ENCODE measurements at regions of chr2 and their contacts with region 1.

Region 1: GRCh38 chr2:241637000-241637791 is at the starts of genes ATG4B and THAP4:
- DNase-seq: peak; percentile 84
- H3K4me3 Mint-ChIP-seq: peak within 1 kb of the TSS; percentile 91
- H3K27ac Mint-ChIP-seq: peak within 1 kb of the TSS; percentile 84
- H3K4me1 Mint-ChIP-seq: peaks cover 54% of the 10 kb centered on the region
- H3K27me3 Mint-ChIP-seq: no peaks in the 10 kb centered on the region
- total RNA-seq, gene ATG4B: 85.0 to 85.9 TPM
- total RNA-seq, gene THAP4: 43.7 to 44.5 TPM

Region 2: GRCh38 chr2:241508240-241509154 is 128.7 kb before region 1 on chr2 and contains the start of gene STK25:
- CTCF ChIA-PET with region 1: no interaction called
- POLR2A ChIA-PET with region 1: no interaction called
- intact Hi-C with region 1: loop called (anchors 1 kb)
- DNase-seq: peak; percentile 98
- H3K4me3 Mint-ChIP-seq: peak within 1 kb of the TSS; percentile 79
- H3K27ac Mint-ChIP-seq: peak within 1 kb of the TSS; percentile 56
- H3K4me1 Mint-ChIP-seq: peaks cover 19% of the 10 kb centered on the region
- H3K27me3 Mint-ChIP-seq: no peaks in the 10 kb centered on the region
- total RNA-seq, gene STK25: 97.9 to 99.1 TPM

Region 3: DNA sequence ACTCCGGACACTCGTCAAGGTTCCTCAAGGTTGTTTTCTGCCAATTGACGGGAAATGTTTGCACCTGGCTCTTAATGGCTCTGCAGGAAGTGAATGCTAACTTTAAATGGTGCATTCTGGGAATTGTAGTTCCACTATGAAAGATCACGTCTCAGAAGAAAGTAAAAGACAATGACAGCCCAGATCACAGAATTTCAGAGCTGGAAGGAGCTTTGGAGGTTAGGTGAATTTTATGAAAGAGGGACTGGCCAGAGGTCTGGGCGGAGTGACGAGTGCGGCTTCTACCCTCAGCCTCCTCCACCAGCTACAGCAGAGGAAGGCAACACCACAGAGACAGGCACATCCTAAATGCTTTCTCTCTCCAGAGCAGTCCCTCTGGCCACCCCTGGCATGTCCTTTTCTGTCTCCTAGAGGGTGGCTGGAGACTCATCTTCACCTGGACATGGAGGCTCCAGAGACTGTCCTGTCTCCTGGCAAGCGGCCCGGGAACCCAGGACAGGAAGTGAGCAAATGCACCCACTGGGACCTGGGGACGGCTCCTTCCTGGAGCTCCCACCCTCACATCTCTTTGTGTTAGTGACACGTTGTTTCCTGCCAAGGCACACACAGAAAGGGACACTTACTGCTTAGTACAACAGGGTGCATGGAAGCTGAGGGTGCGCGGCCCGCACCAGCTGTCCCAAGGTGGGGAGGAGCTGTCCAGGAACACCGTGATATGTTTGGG is 19.6 kb before region 1 on chr2:
- CTCF ChIA-PET with region 1: interaction called, 3 read pairs
- POLR2A ChIA-PET with region 1: no interaction called
- intact Hi-C with region 1: loop called (anchors 1 kb)
- DNase-seq: peak; percentile 63
- H3K4me3 Mint-ChIP-seq: peak overlapping the region; percentile 74
- H3K27ac Mint-ChIP-seq: peak overlapping the region; percentile 87
- H3K4me1 Mint-ChIP-seq: peaks cover 47% of the 10 kb centered on the region
- H3K27me3 Mint-ChIP-seq: no peaks in the 10 kb centered on the region

Region 4: DNA sequence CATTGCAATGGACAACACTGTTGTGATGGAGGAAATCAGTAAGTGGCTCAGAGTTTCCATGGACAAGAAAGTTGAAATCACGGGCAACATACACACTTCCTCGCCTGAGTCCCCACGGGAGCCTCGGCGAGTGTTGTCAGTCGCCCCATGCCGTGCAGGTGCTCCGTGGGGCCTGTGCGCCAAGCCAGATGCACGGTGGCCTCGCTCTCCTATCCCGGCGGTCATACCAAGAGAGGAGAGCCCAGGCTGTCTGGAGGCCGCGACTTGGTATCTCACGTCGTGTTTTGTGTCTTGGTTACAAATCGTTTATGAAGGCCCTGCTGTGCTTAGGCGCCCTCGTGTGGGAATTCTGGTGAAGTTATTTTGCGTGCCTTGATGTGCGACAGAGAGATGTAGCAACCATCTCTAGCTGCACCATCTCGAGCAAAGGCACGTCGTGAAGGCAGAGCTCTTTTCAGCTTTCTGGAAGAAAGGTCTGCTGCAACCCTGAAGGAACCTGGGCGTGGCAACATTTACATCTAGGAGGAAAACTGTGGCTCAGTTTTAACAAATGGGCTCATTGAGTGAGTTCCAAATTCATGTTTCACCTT is 22.0 kb after region 1 on chr2:
- CTCF ChIA-PET with region 1: interaction called, 11 read pairs
- POLR2A ChIA-PET with region 1: no interaction called
- intact Hi-C with region 1: no loop called
- DNase-seq: peak; percentile 59
- H3K4me3 Mint-ChIP-seq: no peak overlapping the region
- H3K27ac Mint-ChIP-seq: no peak overlapping the region
- H3K4me1 Mint-ChIP-seq: no peaks in the 10 kb centered on the region
- H3K27me3 Mint-ChIP-seq: no peaks in the 10 kb centered on the region

Region 5: DNA sequence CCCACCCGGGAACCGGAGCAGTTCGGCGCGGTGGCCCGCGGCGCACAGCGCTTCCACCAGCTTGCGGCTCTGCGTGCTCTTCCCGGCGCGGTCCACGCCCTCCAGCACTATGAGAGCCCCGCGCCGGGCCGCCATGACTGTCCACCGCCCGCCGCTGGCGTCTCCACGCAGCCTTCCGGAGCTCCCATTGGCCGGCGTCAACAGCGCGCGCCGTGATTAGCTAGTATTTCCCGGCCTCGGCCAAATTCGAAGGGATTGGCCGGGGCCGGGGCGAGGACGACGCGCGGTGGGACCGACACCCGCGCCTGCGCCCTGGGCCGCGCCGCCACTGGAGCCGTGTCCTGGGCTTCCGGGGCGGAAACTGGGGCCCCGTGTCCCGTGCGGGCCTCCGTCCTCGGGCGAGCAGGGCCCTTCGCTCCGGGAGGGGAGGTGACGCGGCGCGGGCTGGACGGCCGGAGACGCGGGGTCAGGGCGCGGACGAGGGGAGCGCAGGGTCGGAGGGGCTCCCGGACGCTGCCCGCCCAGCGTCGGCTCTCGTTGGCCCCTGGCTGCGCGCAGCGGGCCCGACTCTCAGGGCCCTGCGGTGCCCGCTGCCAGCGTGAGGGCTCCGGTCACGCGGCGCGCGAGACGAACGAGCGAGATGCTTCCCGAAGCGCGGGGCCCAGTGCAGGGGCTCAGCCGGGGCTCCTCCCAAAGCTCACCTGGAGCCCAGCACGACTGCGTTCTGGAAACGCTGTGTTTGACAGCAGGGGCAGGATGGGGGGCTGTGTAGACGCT is 49.6 kb after region 1 on chr2 and contains the start of gene DTYMK:
- CTCF ChIA-PET with region 1: interaction called, 3 read pairs
- POLR2A ChIA-PET with region 1: interaction called, 5 read pairs
- intact Hi-C with region 1: loop called (anchors 1 kb)
- DNase-seq: peak; percentile 97
- H3K4me3 Mint-ChIP-seq: peak within 1 kb of the TSS; percentile 98
- H3K27ac Mint-ChIP-seq: peak within 1 kb of the TSS; percentile 93
- H3K4me1 Mint-ChIP-seq: peaks cover 27% of the 10 kb centered on the region
- H3K27me3 Mint-ChIP-seq: no peaks in the 10 kb centered on the region
- total RNA-seq, gene DTYMK: 85.9 to 88.7 TPM

Measured in activated CD4-positive, alpha-beta memory T cell treated with anti-CD3 and anti-CD28 coated beads for 36 hours (primary cell).